A549 (cell line): ENCODE measurements at regions of chr17 and their contacts with region 1.

Region 1: DNA sequence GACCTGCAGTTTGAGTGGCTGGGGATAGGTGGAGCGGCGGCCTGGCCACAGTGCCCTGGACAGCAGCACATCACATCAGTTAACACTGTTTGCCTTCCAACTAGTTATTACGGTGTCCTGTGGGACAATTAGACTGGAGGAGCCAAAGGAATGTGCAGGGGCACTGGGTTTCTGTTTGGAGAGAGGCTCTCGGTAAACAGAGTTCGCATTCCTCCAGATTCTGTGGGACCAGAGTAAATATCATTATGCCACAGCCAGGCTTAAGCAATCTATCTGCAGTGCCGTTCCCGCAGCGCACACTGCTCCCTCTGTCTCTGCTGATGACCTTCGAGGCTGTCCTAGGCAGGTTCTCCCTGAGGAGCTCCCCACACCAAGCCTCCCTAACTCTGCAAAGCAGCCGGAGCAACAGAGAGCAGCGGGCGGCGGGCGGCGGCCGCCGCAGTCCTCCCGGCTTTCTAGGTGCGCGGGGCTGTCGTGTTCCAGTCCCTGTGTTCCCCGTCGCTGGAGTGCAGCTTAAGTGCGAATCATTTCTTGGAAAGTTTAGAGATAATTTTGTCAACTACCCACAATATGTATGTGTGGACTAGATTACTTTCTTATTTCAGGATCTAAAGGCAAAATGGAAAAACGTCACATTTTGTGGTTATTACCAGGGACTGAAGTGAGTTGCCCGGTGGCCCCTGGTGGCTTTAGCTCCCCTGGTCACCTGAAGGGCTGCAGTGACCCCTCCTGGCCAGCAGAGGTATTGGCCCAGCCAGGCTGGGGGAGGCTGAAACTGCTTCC is 43.2 kb downstream of the PGS1 start:
- DNase-seq: peak; percentile 91 to 95
- ATAC-seq: peak; percentile 79 to 87
- H3K4me3 ChIP-seq: no peak overlapping the region
- H3K27ac ChIP-seq: peak overlapping the region; percentile 61 to 78
- H3K4me1 ChIP-seq: peaks cover 38% of the 10 kb centered on the region
- CTCF ChIP-seq: peak; percentile 98
- EP300 ChIP-seq: peak in 1 of 2 experiments; percentile 63; a peak in 2 of 5 replicates
- POLR2A ChIP-seq: no peak
- RAD21 ChIP-seq: peak; percentile 95 to 99

Region 2: GRCh38 chr17:78289802-78290363 is 131.8 kb before region 1 on chr17:
- CTCF ChIA-PET with region 1: interaction called, 65 read pairs
- POLR2A ChIA-PET with region 1: no interaction called
- DNase-seq: peak; percentile 85 to 94
- ATAC-seq: peak; percentile 96 to 98
- H3K4me3 ChIP-seq: no peak overlapping the region
- H3K27ac ChIP-seq: peak overlapping the region in 1 of 2 experiments; percentile 59; a peak in 2 of 6 replicates
- H3K4me1 ChIP-seq: peaks cover 4% of the 10 kb centered on the region; the same call in 2 of the 3 replicates
- CTCF ChIP-seq: peak; percentile 85
- EP300 ChIP-seq: no peak
- POLR2A ChIP-seq: no peak
- RAD21 ChIP-seq: peak; percentile 90 to 96

Region 3: DNA sequence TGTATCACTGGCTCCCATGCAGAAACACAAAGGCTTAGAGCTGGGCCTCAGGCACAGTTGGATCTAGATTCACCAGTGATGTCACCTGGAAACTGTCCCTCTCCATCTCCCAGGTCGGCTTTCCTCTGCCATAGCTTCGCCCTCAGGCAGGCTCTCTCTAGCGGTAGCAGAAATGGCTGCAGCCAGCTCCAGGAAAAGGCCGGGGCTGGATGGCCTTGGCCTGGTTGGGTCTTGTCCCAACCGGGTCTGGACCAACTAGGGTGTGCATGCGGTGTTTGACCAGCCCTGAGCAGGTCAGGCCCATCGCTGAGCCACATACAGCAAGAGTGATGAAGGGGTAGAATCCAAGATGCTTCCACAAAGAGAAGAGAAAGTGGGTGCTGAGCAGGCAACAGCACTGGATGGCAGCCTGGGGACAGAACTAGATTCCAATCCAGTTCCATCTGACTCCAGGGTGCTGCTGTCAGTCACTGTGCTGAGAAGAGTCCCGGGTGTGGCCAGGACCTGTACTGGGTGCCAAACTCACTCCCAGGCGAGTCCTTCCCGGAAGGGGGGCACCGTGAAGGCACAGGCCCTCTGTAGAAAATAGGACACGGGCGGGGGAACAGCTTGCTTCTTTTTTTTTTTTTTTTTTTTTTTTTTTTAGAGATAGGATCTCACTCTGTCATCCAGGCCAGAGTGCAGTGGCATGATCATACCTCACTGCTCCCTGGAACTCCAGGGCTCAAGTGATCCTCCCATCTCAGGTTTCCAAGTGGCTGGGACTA is 113.6 kb before region 1 on chr17:
- CTCF ChIA-PET with region 1: interaction called, 45 read pairs
- POLR2A ChIA-PET with region 1: no interaction called
- DNase-seq: no peak
- ATAC-seq: peak; percentile 38 to 51; a peak in 4 of 6 replicates
- H3K4me3 ChIP-seq: no peak overlapping the region
- H3K27ac ChIP-seq: peak overlapping the region in 1 of 2 experiments; percentile 51; a peak in 2 of 6 replicates
- H3K4me1 ChIP-seq: peaks cover 14% of the 10 kb centered on the region
- CTCF ChIP-seq: no peak
- EP300 ChIP-seq: no peak
- POLR2A ChIP-seq: no peak
- RAD21 ChIP-seq: no peak

Region 4: GRCh38 chr17:78341559-78342448 is 79.9 kb before region 1 on chr17:
- CTCF ChIA-PET with region 1: interaction called, 32 read pairs
- POLR2A ChIA-PET with region 1: no interaction called
- DNase-seq: peak; percentile 77 to 83
- ATAC-seq: peak; percentile 58 to 61
- H3K4me3 ChIP-seq: peak overlapping the region; percentile 53
- H3K27ac ChIP-seq: peak overlapping the region; percentile 91 to 97
- H3K4me1 ChIP-seq: peaks cover 74% of the 10 kb centered on the region
- CTCF ChIP-seq: no peak; the same call in 2 of the 3 replicates
- EP300 ChIP-seq: no peak
- POLR2A ChIP-seq: peak; percentile 22; the same call in 1 of the 2 replicates
- RAD21 ChIP-seq: peak in 1 of 2 experiments; percentile 10; a peak in 1 of 5 replicates

Region 5: GRCh38 chr17:78390241-78391050 is 31.2 kb before region 1 on chr17:
- CTCF ChIA-PET with region 1: interaction called, 30 read pairs
- POLR2A ChIA-PET with region 1: no interaction called
- DNase-seq: peak; percentile 59 to 75
- ATAC-seq: peak; percentile 80
- H3K4me3 ChIP-seq: no peak overlapping the region
- H3K27ac ChIP-seq: peak overlapping the region; percentile 18 to 82; a peak in 4 of 6 replicates
- H3K4me1 ChIP-seq: peaks cover 36% of the 10 kb centered on the region
- CTCF ChIP-seq: no peak
- EP300 ChIP-seq: no peak; a peak in 1 of 5 replicates
- POLR2A ChIP-seq: no peak
- RAD21 ChIP-seq: no peak

Region 6: DNA sequence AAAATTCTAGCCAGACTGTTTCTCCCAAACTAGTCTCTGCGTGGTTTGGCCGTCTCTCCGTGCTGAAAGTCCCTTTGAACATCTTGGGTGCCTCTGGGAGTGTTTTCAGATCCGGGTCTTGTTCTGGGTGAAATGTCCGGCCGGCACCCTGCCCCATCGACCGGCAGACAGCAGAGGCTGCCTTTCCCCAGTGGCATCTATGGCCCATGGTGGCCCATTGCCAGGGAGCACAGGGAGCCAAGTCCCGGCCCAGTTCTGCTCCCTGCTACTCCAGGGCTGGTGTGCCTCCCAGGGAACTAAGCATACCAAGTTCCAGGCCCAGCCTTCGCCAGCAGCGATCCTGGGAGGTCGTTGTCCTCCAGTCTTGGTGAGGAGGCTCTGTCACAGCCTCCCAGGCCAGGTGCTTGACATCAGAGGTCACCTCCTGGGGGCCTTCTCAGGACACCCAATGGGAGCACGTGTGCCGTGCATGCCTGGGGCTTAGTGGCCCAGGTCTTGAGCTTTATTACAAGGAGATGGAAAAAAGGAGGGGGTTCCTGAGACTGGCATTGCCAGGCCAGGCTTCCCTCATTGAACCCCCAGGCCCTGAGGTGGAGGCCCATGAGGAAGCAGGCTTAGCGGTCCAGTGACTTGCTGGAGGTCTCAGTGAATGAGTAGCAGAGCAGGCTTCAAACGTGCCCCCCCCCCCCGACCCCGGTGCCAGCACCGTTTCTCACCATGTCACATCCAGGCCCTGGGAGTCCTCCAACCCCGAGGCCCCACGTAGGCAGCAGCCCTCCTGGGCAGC is 10.7 kb after region 1 on chr17:
- CTCF ChIA-PET with region 1: interaction called, 67 read pairs
- POLR2A ChIA-PET with region 1: no interaction called
- DNase-seq: no peak
- ATAC-seq: no peak
- H3K4me3 ChIP-seq: no peak overlapping the region
- H3K27ac ChIP-seq: no peak overlapping the region
- H3K4me1 ChIP-seq: no peaks in the 10 kb centered on the region
- CTCF ChIP-seq: no peak
- EP300 ChIP-seq: no peak
- POLR2A ChIP-seq: no peak
- RAD21 ChIP-seq: no peak

Region 7: GRCh38 chr17:78532922-78533640 is 111.4 kb after region 1 on chr17:
- CTCF ChIA-PET with region 1: no interaction called
- POLR2A ChIA-PET with region 1: no interaction called
- DNase-seq: peak; percentile 88 to 90
- ATAC-seq: peak; percentile 61 to 74; a peak in 5 of 6 replicates
- H3K4me3 ChIP-seq: no peak overlapping the region
- H3K27ac ChIP-seq: peak overlapping the region; percentile 54 to 81; a peak in 5 of 6 replicates
- H3K4me1 ChIP-seq: peaks cover 49% of the 10 kb centered on the region
- CTCF ChIP-seq: no peak
- EP300 ChIP-seq: peak in 1 of 2 experiments; percentile 33; a peak in 1 of 5 replicates
- POLR2A ChIP-seq: no peak
- RAD21 ChIP-seq: no peak